ENCODE measurements at regions of chr1 and their contacts with region 1.

Region 1: GRCh38 chr1:166875734-166876539 is at the start of gene TADA1:
- DNase-seq: peak; percentile 98
- H3K4me3 ChIP-seq: peak within 1 kb of the TSS; percentile 71 to 79
- H3K27ac ChIP-seq: peak within 1 kb of the TSS; percentile 89
- H3K4me1 ChIP-seq: peaks cover 41% of the 10 kb centered on the region
- H3K27me3 ChIP-seq: no peaks in the 10 kb centered on the region
- CTCF ChIP-seq: no peak
- POLR2A ChIP-seq: no peak
- total RNA-seq, gene TADA1: 14.0 TPM

Region 2: DNA sequence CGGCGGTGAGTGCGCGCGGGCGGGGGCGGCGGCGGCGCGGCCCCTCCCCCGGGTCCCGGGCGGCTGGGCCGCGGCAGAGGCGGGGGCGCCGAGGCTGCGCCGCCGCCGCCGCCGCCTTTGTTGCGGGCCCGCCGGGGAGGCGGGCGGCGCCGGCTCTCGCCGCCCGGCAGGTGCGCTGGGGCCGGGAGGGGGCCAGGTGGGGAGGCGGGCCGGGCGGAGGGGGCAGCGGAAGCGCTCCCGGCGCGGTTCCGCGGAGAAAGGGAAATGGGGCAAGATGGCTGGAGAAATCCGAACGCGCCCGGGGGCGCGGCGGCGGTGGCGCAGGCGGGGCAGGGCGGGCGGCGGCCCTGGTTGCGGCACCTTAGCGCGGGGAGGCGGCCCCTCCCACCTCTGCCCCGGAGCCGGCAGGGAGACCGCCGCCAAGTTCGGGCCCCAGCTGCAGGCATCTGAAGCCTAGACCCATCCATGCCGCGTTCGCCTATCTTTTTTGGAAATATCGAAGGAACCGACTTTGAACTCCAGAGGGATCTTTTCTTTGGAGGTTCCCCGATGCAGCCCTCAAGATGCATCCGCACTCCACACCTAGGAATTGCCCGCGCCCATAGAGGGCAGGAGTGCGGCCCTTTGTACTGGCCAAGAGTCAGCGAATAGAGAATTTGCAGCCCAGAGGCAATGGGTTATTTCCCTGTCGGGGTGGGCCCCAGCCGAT is 36.2 kb before region 1 on chr1:
- intact Hi-C with region 1: loop called (anchors 5 kb)
- DNase-seq: no peak
- H3K4me3 ChIP-seq: peak overlapping the region; percentile 55 to 65
- H3K27ac ChIP-seq: peak overlapping the region; percentile 77
- H3K4me1 ChIP-seq: peaks cover 56% of the 10 kb centered on the region
- H3K27me3 ChIP-seq: no peaks in the 10 kb centered on the region
- CTCF ChIP-seq: no peak
- POLR2A ChIP-seq: no peak

Region 3: DNA sequence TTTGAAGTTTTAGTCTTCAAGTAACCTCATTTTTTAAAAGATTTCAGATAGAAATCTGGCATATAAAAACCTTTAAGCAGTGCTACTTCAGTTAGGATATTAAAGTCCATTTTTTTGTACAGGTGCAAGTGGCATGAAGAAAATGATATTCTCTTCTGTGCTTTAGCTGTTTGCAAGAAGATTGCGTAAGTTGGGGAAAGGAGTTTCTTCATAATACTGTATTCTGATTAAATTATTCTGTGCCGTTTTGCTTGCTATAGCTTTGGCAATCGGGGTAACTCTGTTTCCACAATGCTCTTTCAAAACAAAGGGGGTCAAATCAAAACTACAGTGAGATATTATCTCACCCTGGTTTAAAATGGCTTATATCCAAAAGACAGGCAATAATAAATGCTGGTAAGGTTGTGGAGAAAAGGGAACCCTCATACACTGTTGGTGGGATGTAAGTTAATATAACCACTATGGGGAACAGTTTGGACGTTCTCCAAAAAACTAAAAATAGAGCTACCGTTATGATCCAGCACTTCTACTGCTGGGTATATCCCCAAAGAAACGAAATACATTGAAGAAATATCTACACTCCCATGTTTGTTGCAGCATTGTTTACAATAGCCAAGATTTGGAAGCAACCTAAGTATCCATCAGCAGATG is 140.3 kb after region 1 on chr1:
- intact Hi-C with region 1: no loop called
- DNase-seq: no peak
- H3K4me3 ChIP-seq: no peak overlapping the region
- H3K27ac ChIP-seq: no peak overlapping the region
- H3K4me1 ChIP-seq: no peaks in the 10 kb centered on the region
- H3K27me3 ChIP-seq: no peaks in the 10 kb centered on the region
- CTCF ChIP-seq: no peak
- POLR2A ChIP-seq: no peak

Region 4: DNA sequence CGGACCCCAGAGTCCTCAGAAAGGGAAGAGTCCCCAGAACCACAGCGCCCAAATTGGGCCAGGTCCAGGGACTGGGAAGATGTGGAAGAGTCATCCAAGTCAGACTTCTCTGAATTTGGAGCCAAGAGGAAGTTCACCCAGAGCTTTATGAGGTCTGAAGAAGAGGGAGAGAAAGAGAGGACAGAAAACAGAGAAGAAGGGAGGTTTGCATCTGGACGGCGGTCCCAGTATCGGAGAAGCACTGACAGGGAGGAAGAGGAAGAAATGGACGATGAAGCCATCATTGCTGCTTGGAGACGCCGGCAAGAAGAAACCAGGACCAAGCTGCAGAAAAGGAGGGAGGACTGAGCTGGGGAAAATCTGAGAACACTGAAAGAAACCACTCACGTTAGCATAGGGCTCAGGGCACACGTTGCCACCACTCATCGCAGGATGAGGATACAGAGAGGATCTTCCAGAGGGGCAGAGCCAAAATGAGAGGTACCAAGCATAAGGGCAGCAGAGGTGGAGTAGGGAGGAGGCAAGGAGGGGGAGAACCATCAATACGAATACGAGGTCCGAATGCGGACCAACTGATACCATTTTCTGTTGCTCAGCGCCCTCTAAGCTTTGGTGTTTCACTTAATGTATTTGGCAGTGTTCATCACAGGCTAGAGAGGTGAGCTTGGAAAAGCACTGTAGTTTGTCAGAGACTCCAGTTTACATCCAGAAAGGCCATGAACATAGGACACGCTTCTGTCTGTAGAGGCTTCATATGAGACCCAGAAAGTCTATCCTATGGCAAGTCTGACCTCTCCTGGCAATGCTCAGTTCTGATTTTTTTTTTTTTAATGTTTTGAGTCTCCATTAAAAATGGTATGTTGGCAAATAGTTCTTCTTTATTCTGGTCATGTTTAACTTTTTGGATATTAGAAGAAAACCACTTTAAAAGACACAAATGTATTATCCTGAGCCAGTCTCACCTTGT is 252.6 kb after region 1 on chr1:
- intact Hi-C with region 1: no loop called
- DNase-seq: peak in 1 of 2 donors; percentile 47
- H3K4me3 ChIP-seq: no peak overlapping the region
- H3K27ac ChIP-seq: no peak overlapping the region
- H3K4me1 ChIP-seq: no peaks in the 10 kb centered on the region
- H3K27me3 ChIP-seq: no peaks in the 10 kb centered on the region
- CTCF ChIP-seq: no peak
- POLR2A ChIP-seq: no peak

Region 5: GRCh38 chr1:167229719-167230385 is 353.9 kb after region 1 on chr1:
- intact Hi-C with region 1: loop called (anchors 10 kb)
- DNase-seq: no peak
- H3K4me3 ChIP-seq: no peak overlapping the region
- H3K27ac ChIP-seq: no peak overlapping the region
- H3K4me1 ChIP-seq: peaks cover 61% of the 10 kb centered on the region
- H3K27me3 ChIP-seq: no peaks in the 10 kb centered on the region
- CTCF ChIP-seq: no peak
- POLR2A ChIP-seq: no peak